ENCODE measurements at regions of chr3 and their contacts with region 1.

Region 1: GRCh38 chr3:119676771-119677640 is at the start of gene COX17:
- DNase-seq: peak; percentile 97
- ATAC-seq: peak; percentile 91
- H3K4me3 Mint-ChIP-seq: peak within 1 kb of the TSS; percentile 95
- H3K27ac Mint-ChIP-seq: peak within 1 kb of the TSS; percentile 97
- H3K4me1 Mint-ChIP-seq: peaks cover 36% of the 10 kb centered on the region
- H3K27me3 Mint-ChIP-seq: no peaks in the 10 kb centered on the region
- total RNA-seq, gene COX17: 69.5 to 82.8 TPM

Region 2: GRCh38 chr3:119145500-119146191 is 531.4 kb before region 1 on chr3 and contains the start of gene TEX55:
- CTCF ChIA-PET with region 1: no interaction called
- POLR2A ChIA-PET with region 1: no interaction called
- intact Hi-C with region 1: loop called in 1 of 2 experiments (anchors 2 kb)
- DNase-seq: peak; percentile 26
- ATAC-seq: peak; percentile 81
- H3K4me3 Mint-ChIP-seq: no peak within 1 kb of the TSS
- H3K27ac Mint-ChIP-seq: peak within 1 kb of the TSS; percentile 23
- H3K4me1 Mint-ChIP-seq: peaks cover 4% of the 10 kb centered on the region
- H3K27me3 Mint-ChIP-seq: no peaks in the 10 kb centered on the region
- total RNA-seq, gene TEX55: not detected

Region 3: DNA sequence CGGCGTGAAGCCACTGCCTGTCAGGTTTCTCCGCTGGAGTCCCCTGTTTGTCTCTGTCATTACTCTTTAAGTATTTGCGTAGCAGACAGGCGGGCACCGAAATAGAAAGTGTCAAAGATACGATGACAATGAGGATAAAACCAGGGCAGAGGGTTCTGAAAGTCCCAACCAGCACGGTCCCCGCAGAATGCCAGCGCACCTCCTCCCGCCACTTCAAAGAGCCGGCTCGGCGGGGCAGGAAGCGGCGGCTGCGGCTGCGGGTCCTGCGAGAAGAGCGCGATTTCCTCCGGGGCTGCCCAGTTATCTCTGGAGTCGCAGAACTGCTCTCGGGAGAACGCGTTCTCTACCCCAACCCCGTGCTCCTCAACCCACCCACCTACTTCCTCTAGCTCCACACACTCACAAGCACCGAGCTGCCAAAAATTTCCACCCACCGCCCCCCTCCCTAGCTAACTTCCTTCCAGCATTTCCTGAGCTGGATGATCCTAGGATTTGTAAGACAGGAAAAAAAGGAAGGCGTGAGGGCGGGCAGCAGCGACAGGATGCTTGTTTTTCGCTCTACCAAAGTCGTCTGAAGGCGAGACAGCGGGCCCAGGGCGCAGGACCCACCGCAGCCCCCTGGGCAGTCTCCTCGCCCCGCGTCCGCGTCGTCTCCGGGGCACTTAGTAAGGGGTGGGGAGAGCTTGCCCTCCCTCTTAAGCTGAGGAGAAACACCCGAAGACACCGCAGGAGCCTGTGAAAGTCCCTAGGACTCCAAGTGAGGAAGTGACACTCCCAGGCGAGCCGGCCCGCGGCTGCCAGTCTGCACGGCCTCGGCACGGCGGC is 382.9 kb before region 1 on chr3 and contains the start of gene ARHGAP31:
- CTCF ChIA-PET with region 1: interaction called, 3 read pairs
- POLR2A ChIA-PET with region 1: no interaction called
- intact Hi-C with region 1: loop called (anchors 1 to 10 kb)
- DNase-seq: peak; percentile 93
- ATAC-seq: peak; percentile 78
- H3K4me3 Mint-ChIP-seq: peak within 1 kb of the TSS; percentile 82
- H3K27ac Mint-ChIP-seq: peak within 1 kb of the TSS; percentile 93
- H3K4me1 Mint-ChIP-seq: peaks cover 52% of the 10 kb centered on the region
- H3K27me3 Mint-ChIP-seq: no peaks in the 10 kb centered on the region
- total RNA-seq, gene ARHGAP31: 9.2 to 9.6 TPM

Region 4: GRCh38 chr3:119498186-119498987 is 178.6 kb before region 1 on chr3 and contains the start of gene TIMMDC1:
- CTCF ChIA-PET with region 1: interaction called, 4 read pairs
- POLR2A ChIA-PET with region 1: interaction called, 12 read pairs
- intact Hi-C with region 1: loop called (anchors 1 kb)
- DNase-seq: peak; percentile 99
- ATAC-seq: peak; percentile 99
- H3K4me3 Mint-ChIP-seq: peak within 1 kb of the TSS; percentile 96
- H3K27ac Mint-ChIP-seq: peak within 1 kb of the TSS; percentile 99
- H3K4me1 Mint-ChIP-seq: peaks cover 39% of the 10 kb centered on the region
- H3K27me3 Mint-ChIP-seq: no peaks in the 10 kb centered on the region
- total RNA-seq, gene TIMMDC1: 82.3 to 96.0 TPM

Region 5: GRCh38 chr3:119637679-119638525 is 39.1 kb before region 1 on chr3:
- CTCF ChIA-PET with region 1: no interaction called
- POLR2A ChIA-PET with region 1: interaction called, 4 read pairs
- intact Hi-C with region 1: loop called (anchors 1 kb)
- DNase-seq: peak; percentile 14
- ATAC-seq: peak; percentile 34
- H3K4me3 Mint-ChIP-seq: no peak overlapping the region
- H3K27ac Mint-ChIP-seq: peak overlapping the region; percentile 92
- H3K4me1 Mint-ChIP-seq: peaks cover 38% of the 10 kb centered on the region
- H3K27me3 Mint-ChIP-seq: no peaks in the 10 kb centered on the region

Region 6: DNA sequence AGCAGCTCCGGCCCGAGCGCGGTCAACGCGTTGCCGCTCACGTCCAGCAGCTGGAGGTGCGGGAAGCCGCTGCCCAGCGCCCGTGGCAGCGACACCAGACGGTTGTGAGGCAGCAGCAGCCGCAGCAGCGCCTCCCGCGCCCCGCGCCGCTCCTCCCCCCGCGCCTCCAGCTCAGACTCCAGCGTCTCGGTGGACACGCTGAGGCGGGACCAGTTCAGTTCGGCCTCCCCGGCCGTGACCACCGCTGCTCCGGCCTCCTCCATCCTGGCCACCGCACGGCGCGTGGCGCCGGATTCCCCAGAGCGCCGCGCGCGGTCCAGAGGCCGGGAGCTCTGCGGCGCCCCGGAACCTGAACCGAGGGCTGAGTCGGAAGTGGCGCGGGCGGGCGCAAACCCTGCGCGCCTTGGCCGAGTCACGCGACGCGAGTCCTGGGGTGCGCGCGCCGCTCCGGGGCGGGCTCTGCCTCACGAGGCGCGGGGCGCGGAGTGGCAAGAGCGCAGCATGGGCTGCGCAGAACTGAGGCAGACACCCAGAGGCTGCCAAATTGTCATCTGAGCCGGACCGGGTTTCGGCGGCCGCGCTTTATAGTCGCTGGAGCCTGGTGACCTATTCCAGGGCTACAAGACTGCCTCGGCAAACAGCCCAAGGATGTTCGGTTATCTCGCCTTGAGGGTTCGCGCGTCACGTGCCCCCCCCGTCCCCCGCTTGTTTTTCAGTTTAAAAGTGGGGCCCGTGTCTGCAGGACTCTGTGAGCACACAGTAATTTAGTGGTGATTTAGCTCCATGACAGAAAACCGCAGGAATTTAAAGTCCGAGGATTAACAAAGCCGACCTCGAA is 672.2 kb after region 1 on chr3 and contains the start of gene LRRC58:
- CTCF ChIA-PET with region 1: no interaction called
- POLR2A ChIA-PET with region 1: no interaction called
- intact Hi-C with region 1: loop called in 1 of 2 experiments (anchors 2 kb)
- DNase-seq: peak; percentile 93
- ATAC-seq: peak; percentile 88
- H3K4me3 Mint-ChIP-seq: peak within 1 kb of the TSS; percentile 91
- H3K27ac Mint-ChIP-seq: peak within 1 kb of the TSS; percentile 94
- H3K4me1 Mint-ChIP-seq: peaks cover 43% of the 10 kb centered on the region
- H3K27me3 Mint-ChIP-seq: peaks cover 2% of the 10 kb centered on the region
- total RNA-seq, gene LRRC58: 20.7 to 22.2 TPM